Activated naive CD4-positive, alpha-beta T cell treated with anti-CD3 and anti-CD28 coated beads for 36 hours (primary cell): ENCODE measurements at regions of chr17 and their contacts with region 1.

Region 1: DNA sequence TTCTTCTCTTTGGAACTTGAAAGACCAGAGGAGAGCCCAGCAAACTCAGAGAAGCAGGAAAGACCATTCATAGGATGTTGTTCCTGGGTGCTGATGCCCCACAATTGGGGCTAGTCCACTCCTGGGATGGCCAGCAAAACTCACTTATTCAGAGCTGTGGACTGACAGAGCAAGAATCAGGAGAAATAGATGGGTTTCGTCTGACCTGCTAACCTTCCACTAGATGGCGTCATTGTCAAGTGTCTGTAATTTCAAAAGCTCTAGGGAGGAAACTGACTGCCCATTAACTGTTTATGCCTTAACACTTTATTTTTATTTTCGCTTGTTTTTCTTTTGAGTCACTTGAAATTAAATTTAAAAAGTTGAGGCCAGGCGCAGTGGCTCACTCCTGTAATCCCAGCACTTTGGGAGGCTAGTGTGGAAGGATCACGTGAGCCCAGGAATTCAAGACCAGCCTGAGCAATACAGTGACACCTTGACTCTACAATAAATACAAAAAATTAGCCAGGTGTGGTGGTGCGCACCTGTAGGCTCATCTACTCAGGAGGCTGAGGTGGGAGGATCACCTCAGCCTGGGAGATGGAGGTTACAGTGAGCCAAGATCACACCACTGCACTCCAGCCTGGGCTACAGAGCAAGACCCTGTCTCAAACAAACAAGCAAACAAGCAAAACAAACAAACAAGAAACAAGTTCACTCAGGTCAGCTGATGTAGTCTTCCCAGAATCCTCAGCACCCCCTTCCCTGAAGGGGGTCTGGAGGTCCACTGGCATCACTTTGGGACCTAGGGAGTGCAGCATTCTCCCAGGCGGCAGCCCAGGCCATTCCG is 28.6 kb upstream of the MILR1 start:
- DNase-seq: no peak
- H3K4me3 Mint-ChIP-seq: no peak overlapping the region
- H3K27ac Mint-ChIP-seq: no peak overlapping the region
- H3K4me1 Mint-ChIP-seq: no peaks in the 10 kb centered on the region
- H3K27me3 Mint-ChIP-seq: no peaks in the 10 kb centered on the region

Region 2: DNA sequence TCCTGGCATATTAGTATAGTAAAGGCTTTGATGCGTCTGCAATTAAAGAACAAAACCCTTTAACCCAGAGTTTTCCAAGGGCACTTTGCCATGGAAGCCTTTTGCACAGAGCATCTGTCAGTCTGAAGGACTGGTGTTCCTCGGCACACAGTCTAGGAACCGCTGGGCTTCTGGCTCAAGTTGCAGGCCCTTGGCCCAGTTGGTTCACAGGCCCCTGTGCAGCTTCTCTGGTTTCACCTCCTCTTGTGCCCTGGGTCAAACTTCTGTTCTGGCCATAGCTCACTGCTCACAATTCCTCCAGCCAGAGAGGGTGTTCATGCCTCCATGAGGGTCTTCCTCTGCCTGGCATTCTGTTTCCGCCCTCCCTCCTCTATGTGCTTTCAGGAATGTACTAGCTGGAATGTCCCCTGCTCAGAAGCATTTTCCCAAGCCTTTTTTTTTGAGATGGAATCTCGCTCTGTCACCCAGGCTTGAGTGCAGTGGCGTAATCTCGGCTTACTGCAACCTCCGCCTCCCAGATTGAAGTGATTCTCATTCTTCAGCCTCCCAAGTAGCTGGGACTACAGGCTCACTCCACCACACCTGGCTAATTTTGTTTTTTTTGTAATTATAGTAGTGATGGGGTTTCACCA is 122.8 kb before region 1 on chr17:
- CTCF ChIA-PET with region 1: interaction called, 35 read pairs
- intact Hi-C with region 1: no loop called
- DNase-seq: no peak
- H3K4me3 Mint-ChIP-seq: no peak overlapping the region
- H3K27ac Mint-ChIP-seq: no peak overlapping the region
- H3K4me1 Mint-ChIP-seq: no peaks in the 10 kb centered on the region
- H3K27me3 Mint-ChIP-seq: no peaks in the 10 kb centered on the region

Region 3: DNA sequence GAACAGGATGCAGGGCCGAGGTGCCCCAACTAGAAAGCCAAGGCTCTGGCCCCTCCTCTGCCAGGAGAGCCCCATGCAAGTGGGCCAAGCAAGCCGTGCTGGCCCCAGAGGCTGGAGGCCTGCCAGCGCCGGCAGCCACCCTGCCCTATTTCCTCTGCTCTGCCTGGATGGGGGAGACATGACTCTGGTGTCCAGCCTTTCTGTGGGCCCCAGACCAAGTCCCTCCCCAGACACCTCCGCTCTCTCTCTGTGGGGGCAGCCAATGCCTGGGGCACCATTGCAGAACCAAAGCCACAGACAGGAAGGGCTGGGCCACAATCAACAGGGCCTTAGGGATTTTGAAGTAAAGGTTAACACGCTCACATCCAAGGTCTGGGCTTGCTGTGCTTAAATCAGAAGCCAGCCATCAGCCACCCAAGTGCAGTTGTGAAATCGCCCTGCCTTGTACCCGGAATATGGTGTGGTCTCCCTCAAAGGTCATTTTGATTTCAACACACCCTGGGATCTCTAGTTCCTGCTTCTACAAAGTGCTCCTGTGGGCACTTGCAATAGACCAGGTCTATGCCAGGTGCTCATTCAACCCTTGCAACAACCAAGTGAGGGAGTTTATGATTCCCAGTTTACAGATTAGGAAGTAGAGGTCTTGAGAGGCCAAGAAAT is 93.8 kb before region 1 on chr17:
- CTCF ChIA-PET with region 1: interaction called, 140 read pairs
- intact Hi-C with region 1: loop called (anchors 1 kb)
- DNase-seq: no peak
- H3K4me3 Mint-ChIP-seq: no peak overlapping the region
- H3K27ac Mint-ChIP-seq: no peak overlapping the region
- H3K4me1 Mint-ChIP-seq: peaks cover 15% of the 10 kb centered on the region
- H3K27me3 Mint-ChIP-seq: no peaks in the 10 kb centered on the region

Region 4: GRCh38 chr17:64441772-64442540 is 21.6 kb after region 1 on chr17:
- CTCF ChIA-PET with region 1: interaction called, 20 read pairs
- intact Hi-C with region 1: no loop called
- DNase-seq: peak; percentile 53
- H3K4me3 Mint-ChIP-seq: peak overlapping the region; percentile 42
- H3K27ac Mint-ChIP-seq: peak overlapping the region; percentile 57
- H3K4me1 Mint-ChIP-seq: peaks cover 25% of the 10 kb centered on the region
- H3K27me3 Mint-ChIP-seq: no peaks in the 10 kb centered on the region

Region 5: GRCh38 chr17:64496786-64497564 is 76.6 kb after region 1 on chr17 and contains the start of gene POLG2:
- CTCF ChIA-PET with region 1: interaction called, 114 read pairs
- intact Hi-C with region 1: no loop called
- DNase-seq: peak; percentile 96
- H3K4me3 Mint-ChIP-seq: peak within 1 kb of the TSS; percentile 100
- H3K27ac Mint-ChIP-seq: peak within 1 kb of the TSS; percentile 97
- H3K4me1 Mint-ChIP-seq: peaks cover 74% of the 10 kb centered on the region
- H3K27me3 Mint-ChIP-seq: no peaks in the 10 kb centered on the region
- total RNA-seq, gene POLG2: 23.4 to 26.9 TPM

Region 6: GRCh38 chr17:64648234-64648633 is 227.9 kb after region 1 on chr17:
- CTCF ChIA-PET with region 1: interaction called, 33 read pairs
- intact Hi-C with region 1: loop called (anchors 1 kb)
- DNase-seq: no peak
- H3K4me3 Mint-ChIP-seq: no peak overlapping the region
- H3K27ac Mint-ChIP-seq: no peak overlapping the region
- H3K4me1 Mint-ChIP-seq: peaks cover 33% of the 10 kb centered on the region
- H3K27me3 Mint-ChIP-seq: no peaks in the 10 kb centered on the region

Region 7: GRCh38 chr17:65103896-65104295 is 683.5 kb after region 1 on chr17:
- CTCF ChIA-PET with region 1: no interaction called
- intact Hi-C with region 1: no loop called
- DNase-seq: no peak
- H3K4me3 Mint-ChIP-seq: no peak overlapping the region
- H3K27ac Mint-ChIP-seq: no peak overlapping the region
- H3K4me1 Mint-ChIP-seq: peaks cover 14% of the 10 kb centered on the region
- H3K27me3 Mint-ChIP-seq: no peaks in the 10 kb centered on the region